ENCODE measurements at regions of chr5 and their contacts with region 1.

Region 1: GRCh38 chr5:180315762-180316212 is 23.9 kb upstream of the MAPK9 start:
- DNase-seq: no peak
- ATAC-seq: peak; percentile 97
- H3K4me3 ChIP-seq: no peak overlapping the region
- H3K27ac ChIP-seq: no peak overlapping the region
- H3K4me1 ChIP-seq: no peaks in the 10 kb centered on the region
- H3K27me3 ChIP-seq: no peaks in the 10 kb centered on the region; a peak in 1 of 4 replicates
- CTCF ChIP-seq: peak; percentile 86 to 99 (median 97)
- EP300 ChIP-seq: no peak
- POLR2A ChIP-seq: no peak
- RAD21 ChIP-seq: peak; percentile 67

Region 2: GRCh38 chr5:180201051-180201987 is 114.5 kb before region 1 on chr5:
- CTCF ChIA-PET with region 1: interaction called, 32 read pairs
- POLR2A ChIA-PET with region 1: no interaction called
- RAD21 ChIA-PET with region 1: interaction called, 5 read pairs
- SMC1A ChIA-PET with region 1: interaction called, 15 read pairs
- in situ Hi-C with region 1: no loop called
- intact Hi-C with region 1: no loop called
- DNase-seq: no peak
- ATAC-seq: no peak
- H3K4me3 ChIP-seq: no peak overlapping the region
- H3K27ac ChIP-seq: no peak overlapping the region
- H3K4me1 ChIP-seq: no peaks in the 10 kb centered on the region
- H3K27me3 ChIP-seq: no peaks in the 10 kb centered on the region
- CTCF ChIP-seq: peak; percentile 30 to 47 (median 33); a peak in 4 of 6 replicates
- EP300 ChIP-seq: no peak
- POLR2A ChIP-seq: no peak
- RAD21 ChIP-seq: peak; percentile 30; the same call in 1 of the 2 replicates

Region 3: DNA sequence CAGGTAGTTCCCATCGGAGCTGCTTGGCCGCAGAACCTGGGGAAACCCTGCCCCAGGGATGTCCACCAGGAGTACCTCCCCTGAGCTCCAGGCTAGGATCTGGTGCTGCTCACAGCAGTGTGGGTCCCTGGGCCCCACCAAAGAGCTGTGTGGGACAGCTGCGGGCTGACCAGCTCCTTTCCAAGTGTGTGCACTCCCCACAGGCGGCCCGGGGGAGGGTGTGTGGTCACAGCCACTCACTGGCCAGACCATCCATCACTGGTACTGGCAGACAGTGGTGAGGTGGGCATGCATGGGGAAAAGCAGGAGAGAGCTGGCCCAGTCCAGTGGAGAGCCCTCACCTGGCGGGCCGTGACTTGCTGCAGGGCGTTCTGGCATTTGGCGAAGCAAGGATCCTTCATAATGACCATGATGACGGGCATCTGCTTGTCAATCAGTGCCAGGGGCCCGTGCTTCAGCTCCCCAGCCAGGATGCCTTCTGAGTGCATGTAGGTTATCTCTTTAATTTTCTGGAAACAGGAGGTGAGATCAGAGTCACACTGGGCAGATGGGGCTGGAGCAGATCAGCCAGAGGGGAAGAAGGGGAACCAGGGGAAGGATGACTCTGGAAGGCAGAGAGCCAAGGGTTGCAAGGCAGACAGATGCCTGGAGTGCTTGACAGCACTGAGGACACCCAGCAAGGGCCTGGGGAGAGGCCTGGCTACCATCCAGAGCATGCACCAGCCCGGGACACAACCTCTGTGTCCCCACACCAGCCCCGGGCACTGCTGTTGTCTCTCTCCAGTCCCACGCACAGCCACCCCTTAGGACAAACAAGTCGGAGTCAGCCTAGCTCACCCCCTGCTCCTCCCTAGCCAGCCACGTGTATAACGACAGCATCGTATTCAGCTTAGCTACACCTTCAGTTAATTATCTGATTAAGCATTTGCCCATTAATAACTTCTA is 11.1 kb before region 1 on chr5:
- CTCF ChIA-PET with region 1: interaction called, 11 read pairs
- POLR2A ChIA-PET with region 1: no interaction called
- RAD21 ChIA-PET with region 1: interaction called, 4 read pairs
- SMC1A ChIA-PET with region 1: interaction called, 3 read pairs
- in situ Hi-C with region 1: no loop called
- intact Hi-C with region 1: no loop called
- DNase-seq: no peak
- ATAC-seq: no peak
- H3K4me3 ChIP-seq: no peak overlapping the region
- H3K27ac ChIP-seq: no peak overlapping the region
- H3K4me1 ChIP-seq: no peaks in the 10 kb centered on the region
- H3K27me3 ChIP-seq: peaks cover 0 to 3% of the 10 kb centered on the region in 2 experiments; a peak in 2 of 4 replicates
- CTCF ChIP-seq: no peak
- EP300 ChIP-seq: no peak
- POLR2A ChIP-seq: no peak
- RAD21 ChIP-seq: no peak

Region 4: GRCh38 chr5:180328296-180329137 is 12.7 kb after region 1 on chr5:
- CTCF ChIA-PET with region 1: interaction called, 34 read pairs
- POLR2A ChIA-PET with region 1: no interaction called
- RAD21 ChIA-PET with region 1: interaction called, 4 read pairs
- SMC1A ChIA-PET with region 1: interaction called, 7 read pairs
- in situ Hi-C with region 1: no loop called
- intact Hi-C with region 1: no loop called
- DNase-seq: peak; percentile 17
- ATAC-seq: peak; percentile 99
- H3K4me3 ChIP-seq: no peak overlapping the region
- H3K27ac ChIP-seq: no peak overlapping the region
- H3K4me1 ChIP-seq: no peaks in the 10 kb centered on the region
- H3K27me3 ChIP-seq: no peaks in the 10 kb centered on the region
- CTCF ChIP-seq: peak; percentile 77 to 89 (median 78)
- EP300 ChIP-seq: no peak
- POLR2A ChIP-seq: no peak
- RAD21 ChIP-seq: peak; percentile 58

Region 5: DNA sequence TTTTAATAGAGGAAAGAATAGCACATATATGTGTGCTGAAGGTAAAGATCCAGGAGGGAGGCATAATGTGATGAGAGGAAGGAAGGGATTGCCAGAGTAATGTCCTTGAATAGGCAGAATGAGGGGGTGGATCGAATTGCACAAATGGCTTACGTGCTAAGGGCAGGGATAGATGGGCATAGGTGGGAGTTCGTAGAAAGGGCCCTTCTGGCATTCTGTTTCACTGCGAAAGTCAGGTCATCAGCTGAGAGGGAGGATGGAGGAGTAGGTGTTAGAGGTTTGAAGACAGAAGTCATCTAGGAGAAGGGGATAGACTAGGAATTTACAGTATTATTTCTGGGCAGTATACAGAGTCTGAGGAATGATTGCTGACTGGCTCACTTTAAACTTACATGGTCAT is 210.5 kb after region 1 on chr5:
- CTCF ChIA-PET with region 1: no interaction called
- POLR2A ChIA-PET with region 1: no interaction called
- RAD21 ChIA-PET with region 1: no interaction called
- SMC1A ChIA-PET with region 1: no interaction called
- in situ Hi-C with region 1: no loop called
- intact Hi-C with region 1: no loop called
- DNase-seq: no peak
- ATAC-seq: no peak
- H3K4me3 ChIP-seq: no peak overlapping the region
- H3K27ac ChIP-seq: no peak overlapping the region
- H3K4me1 ChIP-seq: peaks cover 20% of the 10 kb centered on the region
- H3K27me3 ChIP-seq: no peaks in the 10 kb centered on the region
- CTCF ChIP-seq: no peak
- EP300 ChIP-seq: no peak
- POLR2A ChIP-seq: no peak
- RAD21 ChIP-seq: no peak